ENCODE measurements at regions of chr11 and their contacts with region 1.

Region 1: DNA sequence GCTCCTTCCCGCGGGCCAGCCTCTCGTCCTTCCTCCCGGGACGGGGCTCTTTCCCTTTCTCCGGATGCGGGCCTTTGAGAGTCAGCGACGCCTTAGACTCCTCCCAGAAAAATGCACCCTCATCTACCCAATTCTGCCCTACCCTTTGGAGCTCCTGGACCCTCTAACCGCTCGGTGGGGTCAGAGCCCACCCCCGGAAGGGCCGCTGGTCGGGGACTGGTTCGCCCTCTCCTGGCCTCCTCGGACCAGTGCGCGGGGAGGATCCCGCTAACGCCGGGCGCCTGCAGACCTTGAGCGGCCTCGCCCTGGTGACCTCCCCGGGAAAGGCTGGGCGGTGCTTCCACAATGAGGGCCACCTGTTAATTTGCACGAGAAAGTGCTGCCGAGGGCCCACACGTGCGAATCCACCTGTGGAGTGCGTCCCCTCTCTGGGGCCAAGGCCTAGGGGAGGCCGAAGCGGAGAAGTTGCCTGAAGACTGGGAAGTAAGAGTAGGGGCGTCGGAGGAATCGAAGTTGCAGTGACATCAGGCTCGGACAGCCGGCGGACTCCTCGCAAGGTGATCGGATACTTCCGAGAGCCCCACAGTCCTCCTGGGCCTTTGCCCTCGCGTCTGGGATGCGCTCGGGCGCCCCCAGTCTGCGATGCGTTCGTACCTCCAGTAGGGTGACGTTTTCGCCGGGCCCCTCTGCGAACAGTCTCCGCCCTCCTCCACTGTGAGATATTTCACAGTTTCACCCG is 61.5 kb downstream of the ENDOD1 start:
- DNase-seq: peak; percentile 94
- H3K4me3 Mint-ChIP-seq: peak overlapping the region; percentile 74
- H3K27ac Mint-ChIP-seq: peak overlapping the region; percentile 92
- H3K4me1 Mint-ChIP-seq: peaks cover 43% of the 10 kb centered on the region
- H3K27me3 Mint-ChIP-seq: peaks cover 16% of the 10 kb centered on the region

Region 2: GRCh38 chr11:95163106-95163505 is 12.0 kb after region 1 on chr11:
- CTCF ChIA-PET with region 1: interaction called, 10 read pairs
- DNase-seq: no peak
- H3K4me3 Mint-ChIP-seq: no peak overlapping the region
- H3K27ac Mint-ChIP-seq: no peak overlapping the region
- H3K4me1 Mint-ChIP-seq: peaks cover 25% of the 10 kb centered on the region
- H3K27me3 Mint-ChIP-seq: no peaks in the 10 kb centered on the region

Region 3: DNA sequence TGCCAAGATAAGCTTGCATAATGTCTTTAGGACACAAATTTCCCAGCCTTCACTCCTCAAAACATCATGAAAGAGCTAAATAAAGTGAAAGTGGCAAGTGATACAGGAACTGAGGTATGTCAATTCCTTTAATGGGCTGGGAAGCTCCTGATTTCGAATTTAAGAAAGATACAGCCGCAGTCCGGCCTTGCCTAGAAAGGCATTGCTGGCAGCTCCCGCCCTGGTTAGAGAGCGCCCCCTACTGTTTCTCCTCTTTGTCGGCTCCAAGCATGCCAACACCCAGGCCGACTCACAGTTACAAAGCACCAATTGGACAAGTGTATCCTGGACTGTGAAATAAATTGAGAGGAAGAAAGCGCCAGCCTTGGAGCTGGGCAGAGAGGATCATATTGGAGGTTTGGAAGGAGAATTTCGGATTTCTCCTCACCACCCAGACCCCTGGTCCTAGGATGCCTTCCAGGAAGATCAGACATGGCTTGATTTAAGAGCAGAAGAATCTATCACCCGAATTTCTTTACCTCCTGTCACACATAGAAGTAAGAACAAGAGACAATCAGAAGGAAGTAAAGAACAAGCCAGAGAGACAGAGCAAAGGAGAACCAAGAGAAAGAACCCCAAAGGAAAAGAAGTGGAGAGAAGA is 554.5 kb after region 1 on chr11:
- CTCF ChIA-PET with region 1: interaction called, 277 read pairs
- DNase-seq: peak; percentile 92
- H3K4me3 Mint-ChIP-seq: no peak overlapping the region
- H3K27ac Mint-ChIP-seq: no peak overlapping the region
- H3K4me1 Mint-ChIP-seq: peaks cover 14% of the 10 kb centered on the region
- H3K27me3 Mint-ChIP-seq: no peaks in the 10 kb centered on the region

Region 4: GRCh38 chr11:95790123-95790932 is 639.2 kb after region 1 on chr11 and contains the start of gene CEP57:
- CTCF ChIA-PET with region 1: interaction called, 45 read pairs
- DNase-seq: peak; percentile 97
- H3K4me3 Mint-ChIP-seq: peak within 1 kb of the TSS; percentile 96
- H3K27ac Mint-ChIP-seq: peak within 1 kb of the TSS; percentile 100
- H3K4me1 Mint-ChIP-seq: peaks cover 63% of the 10 kb centered on the region
- H3K27me3 Mint-ChIP-seq: no peaks in the 10 kb centered on the region

Measured in activated naive CD4-positive, alpha-beta T cell treated with anti-CD3 and anti-CD28 coated beads, Interleukin-2, amount 10 ng/mL, durations not matched to agents 7 days and 5 days (primary cell).